CD4-positive, alpha-beta memory T cell (primary cell): ENCODE measurements at regions of chr12 and their contacts with region 1.

Region 1: DNA sequence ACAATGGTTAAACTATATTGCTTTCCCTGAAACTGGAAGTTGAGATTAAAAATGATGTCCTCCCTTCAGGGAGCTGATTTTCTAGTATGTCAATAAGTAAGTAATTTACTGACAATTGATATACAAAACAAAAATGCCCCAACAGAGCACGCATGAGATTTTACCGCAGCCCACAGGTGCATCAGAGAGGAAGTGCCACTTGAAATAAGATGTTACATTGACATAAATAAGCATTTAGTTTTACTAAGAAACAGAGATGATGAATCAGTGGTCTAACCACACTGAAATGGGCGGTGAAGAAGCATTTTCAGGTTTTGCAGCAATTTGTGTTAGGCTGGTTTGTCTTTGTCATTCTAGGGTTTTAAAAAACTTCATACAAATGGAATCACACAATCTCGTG is 8.8 kb upstream of the CLECL1 start:
- DNase-seq: peak; percentile 85 to 94 (median 91)
- H3K4me3 ChIP-seq: peak overlapping the region in 1 of 2 donors; percentile 38
- H3K4me3 Mint-ChIP-seq: peak overlapping the region; percentile 66 to 92 (median 84)
- H3K27ac ChIP-seq: peak overlapping the region; percentile 62
- H3K27ac Mint-ChIP-seq: peak overlapping the region; percentile 81 to 100 (median 99)
- H3K4me1 ChIP-seq: peaks cover 68% of the 10 kb centered on the region
- H3K4me1 Mint-ChIP-seq: peaks cover 50 to 69% (median 59%) of the 10 kb centered on the region in 4 donors
- H3K27me3 ChIP-seq: no peaks in the 10 kb centered on the region
- H3K27me3 Mint-ChIP-seq: no peaks in the 10 kb centered on the region

Region 2: DNA sequence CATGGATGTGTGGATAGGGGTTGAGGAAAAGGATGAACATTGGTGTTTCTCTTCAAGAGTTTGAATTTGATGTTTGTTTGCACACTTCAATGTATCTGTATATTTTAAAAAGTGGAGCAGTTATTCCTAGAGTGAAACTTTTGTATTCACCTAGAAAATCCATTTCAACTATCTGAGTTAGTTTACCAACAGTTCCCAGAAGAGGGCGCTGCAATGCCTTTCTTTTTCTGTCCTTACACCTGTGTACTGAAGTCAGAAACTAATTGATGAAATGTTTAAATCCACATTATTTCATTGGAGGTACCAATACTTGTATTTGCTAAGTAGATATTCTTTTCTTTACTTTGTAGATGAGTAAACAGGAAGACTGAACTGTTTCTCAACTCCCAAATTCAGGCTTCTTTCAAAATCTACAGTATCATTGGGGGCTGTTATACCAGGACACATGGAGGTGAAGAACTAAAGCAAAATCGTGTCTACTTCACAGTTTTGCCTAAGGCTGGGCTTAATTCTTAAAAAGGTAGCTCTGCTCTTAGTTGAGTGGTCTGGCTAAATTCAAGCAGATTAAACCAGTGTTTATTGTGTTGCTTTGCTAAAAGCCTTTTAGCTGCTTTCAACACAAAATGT is 107.4 kb before region 1 on chr12:
- CTCF ChIA-PET with region 1: interaction called, 53 read pairs
- POLR2A ChIA-PET with region 1: interaction called, 23 read pairs
- intact Hi-C with region 1: loop called (anchors 1 kb)
- DNase-seq: peak; percentile 76 to 77 (median 77)
- H3K4me3 ChIP-seq: no peak overlapping the region
- H3K4me3 Mint-ChIP-seq: peak overlapping the region in 6 of 8 donors; percentile 51 to 80 (median 61)
- H3K27ac ChIP-seq: no peak overlapping the region
- H3K27ac Mint-ChIP-seq: peak overlapping the region; percentile 22 to 97 (median 91)
- H3K4me1 ChIP-seq: peaks cover 70% of the 10 kb centered on the region
- H3K4me1 Mint-ChIP-seq: peaks cover 47 to 92% (median 73%) of the 10 kb centered on the region in 4 donors
- H3K27me3 ChIP-seq: no peaks in the 10 kb centered on the region
- H3K27me3 Mint-ChIP-seq: no peaks in the 10 kb centered on the region

Region 3: DNA sequence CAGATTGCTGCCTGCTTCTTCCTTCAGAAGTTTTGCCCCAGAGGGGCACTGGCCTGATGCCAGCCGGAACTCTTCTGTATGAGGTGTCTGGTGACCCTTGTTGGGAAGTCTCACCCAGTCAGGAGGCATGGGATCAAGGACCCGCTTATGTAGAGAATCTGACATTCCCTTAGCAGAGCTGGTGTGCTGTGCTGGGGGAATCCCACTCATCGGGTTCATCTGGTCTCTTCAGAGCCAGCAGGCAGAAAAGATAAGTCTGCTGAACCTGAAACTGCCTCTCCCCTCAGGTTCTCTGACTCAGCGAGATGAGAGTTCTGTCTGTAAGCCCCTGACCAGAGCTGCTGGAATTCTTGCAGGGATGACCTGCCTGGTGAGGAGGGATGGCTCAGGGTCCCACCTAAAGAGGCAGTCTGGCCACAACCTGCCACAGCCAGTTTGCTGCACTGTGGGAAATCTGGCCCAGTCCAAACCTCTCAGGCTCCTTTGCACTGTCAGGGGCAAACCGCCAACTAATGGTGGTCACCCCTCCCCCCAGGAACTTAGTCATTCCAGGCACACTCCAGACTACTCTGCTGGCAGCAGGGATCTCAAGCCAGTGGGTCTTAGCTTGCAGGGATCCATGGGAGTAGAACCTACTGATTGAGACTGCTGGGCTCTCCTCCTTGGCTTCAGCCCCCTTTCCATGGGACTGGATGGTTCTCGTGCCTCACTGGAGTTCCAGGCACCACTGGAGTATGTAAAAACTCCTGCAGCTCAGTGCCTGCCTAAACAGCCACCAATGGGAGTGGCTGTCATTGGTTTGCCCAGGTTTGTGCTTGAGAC is 68.1 kb before region 1 on chr12:
- CTCF ChIA-PET with region 1: interaction called, 13 read pairs
- POLR2A ChIA-PET with region 1: interaction called, 39 read pairs
- intact Hi-C with region 1: loop called (anchors 2 kb)
- DNase-seq: peak; percentile 46 to 81 (median 56)
- H3K4me3 ChIP-seq: peak overlapping the region; percentile 32 to 74
- H3K4me3 Mint-ChIP-seq: peak overlapping the region; percentile 87 to 95 (median 94)
- H3K27ac ChIP-seq: peak overlapping the region; percentile 79
- H3K27ac Mint-ChIP-seq: peak overlapping the region; percentile 79 to 98 (median 96)
- H3K4me1 ChIP-seq: peaks cover 72% of the 10 kb centered on the region
- H3K4me1 Mint-ChIP-seq: peaks cover 44 to 89% (median 61%) of the 10 kb centered on the region in 4 donors
- H3K27me3 ChIP-seq: no peaks in the 10 kb centered on the region
- H3K27me3 Mint-ChIP-seq: no peaks in the 10 kb centered on the region

Region 4: GRCh38 chr12:9721394-9722092 is 20.2 kb before region 1 on chr12:
- CTCF ChIA-PET with region 1: interaction called, 11 read pairs
- POLR2A ChIA-PET with region 1: interaction called, 4 read pairs
- intact Hi-C with region 1: no loop called
- DNase-seq: no peak
- H3K4me3 ChIP-seq: no peak overlapping the region
- H3K4me3 Mint-ChIP-seq: no peak overlapping the region
- H3K27ac ChIP-seq: no peak overlapping the region
- H3K27ac Mint-ChIP-seq: peak overlapping the region in 2 of 7 donors; percentile 29 to 40
- H3K4me1 ChIP-seq: no peaks in the 10 kb centered on the region
- H3K4me1 Mint-ChIP-seq: peaks cover 0 to 10% (median 2%) of the 10 kb centered on the region in 4 donors
- H3K27me3 ChIP-seq: no peaks in the 10 kb centered on the region
- H3K27me3 Mint-ChIP-seq: peaks cover 0 to 6% of the 10 kb centered on the region in 2 donors

Region 5: DNA sequence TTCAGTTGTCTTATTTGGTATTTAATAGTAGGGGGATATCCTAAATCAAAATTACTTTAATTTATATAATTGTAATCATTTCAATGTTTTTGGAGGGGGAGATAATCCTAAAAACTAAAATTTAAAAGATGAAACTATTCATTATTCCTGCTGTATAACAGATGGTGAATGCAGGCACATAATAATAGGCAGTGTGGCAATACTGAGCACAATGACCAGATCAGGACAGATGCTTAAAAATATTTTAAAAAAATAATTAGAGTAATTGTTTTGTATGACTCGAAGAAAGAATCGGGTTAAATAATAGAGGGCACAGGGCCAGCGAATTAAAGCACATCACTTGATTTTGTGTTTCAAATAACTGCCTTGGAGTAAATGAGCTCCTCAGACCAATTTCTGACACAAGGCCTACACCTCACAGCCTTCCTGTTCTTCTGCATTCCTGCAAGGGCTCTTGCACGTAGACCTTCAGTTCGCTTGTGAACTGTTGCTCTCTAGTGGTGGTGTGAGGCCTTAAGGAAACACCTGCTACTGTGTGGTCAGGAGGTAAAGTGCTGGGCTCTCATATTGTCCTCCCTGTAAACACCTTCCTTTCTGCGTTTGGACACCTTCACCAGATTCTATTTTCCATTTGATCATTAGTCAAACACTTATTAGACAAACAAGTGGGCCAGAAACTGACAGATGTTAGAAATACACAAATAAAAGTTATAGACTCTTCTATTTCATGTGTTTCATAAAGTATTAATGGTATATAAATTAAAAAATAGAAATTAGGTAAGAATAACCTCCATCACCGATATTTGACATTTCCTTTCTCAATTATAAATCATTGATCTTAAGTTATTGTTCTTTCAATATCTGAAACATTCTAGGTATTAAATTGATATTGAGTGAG is 56.2 kb after region 1 on chr12:
- CTCF ChIA-PET with region 1: interaction called, 889 read pairs
- POLR2A ChIA-PET with region 1: interaction called, 19 read pairs
- intact Hi-C with region 1: no loop called
- DNase-seq: peak; percentile 73 to 79 (median 75)
- H3K4me3 ChIP-seq: no peak overlapping the region
- H3K4me3 Mint-ChIP-seq: peak overlapping the region in 4 of 8 donors; percentile 4 to 70 (median 41)
- H3K27ac ChIP-seq: no peak overlapping the region
- H3K27ac Mint-ChIP-seq: peak overlapping the region in 6 of 7 donors; percentile 57 to 89 (median 81)
- H3K4me1 ChIP-seq: peaks cover 51% of the 10 kb centered on the region
- H3K4me1 Mint-ChIP-seq: peaks cover 35 to 48% (median 43%) of the 10 kb centered on the region in 4 donors
- H3K27me3 ChIP-seq: no peaks in the 10 kb centered on the region
- H3K27me3 Mint-ChIP-seq: peaks cover 0 to 2% of the 10 kb centered on the region in 2 donors

Region 6: DNA sequence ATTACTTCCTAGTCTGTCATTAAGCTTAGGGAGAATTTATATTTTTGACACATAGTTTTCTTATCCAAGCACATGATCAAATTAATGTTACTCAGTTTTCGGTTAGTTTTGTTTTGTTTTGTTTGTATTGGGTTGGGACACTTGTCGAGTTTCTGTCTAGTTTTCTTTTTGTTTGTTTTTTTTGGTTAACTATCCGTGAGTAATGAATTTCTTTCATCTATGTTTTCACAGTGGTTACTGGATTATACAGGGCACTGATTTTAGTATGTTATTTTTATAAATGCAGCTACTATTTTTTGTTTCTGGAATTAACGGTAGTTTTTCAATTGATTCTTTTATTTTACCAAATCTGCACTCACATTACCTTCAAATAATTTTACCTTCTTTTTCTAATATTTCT is 88.3 kb after region 1 on chr12:
- CTCF ChIA-PET with region 1: no interaction called
- POLR2A ChIA-PET with region 1: no interaction called
- intact Hi-C with region 1: no loop called
- DNase-seq: no peak
- H3K4me3 ChIP-seq: no peak overlapping the region
- H3K4me3 Mint-ChIP-seq: no peak overlapping the region
- H3K27ac ChIP-seq: no peak overlapping the region
- H3K27ac Mint-ChIP-seq: no peak overlapping the region
- H3K4me1 ChIP-seq: no peaks in the 10 kb centered on the region
- H3K4me1 Mint-ChIP-seq: peaks cover 0 to 1% (median 0%) of the 10 kb centered on the region in 4 donors
- H3K27me3 ChIP-seq: no peaks in the 10 kb centered on the region
- H3K27me3 Mint-ChIP-seq: peaks cover 0 to 3% of the 10 kb centered on the region in 2 donors

Region 7: GRCh38 chr12:10027721-10028120 is 286.0 kb after region 1 on chr12:
- CTCF ChIA-PET with region 1: no interaction called
- POLR2A ChIA-PET with region 1: no interaction called
- intact Hi-C with region 1: no loop called
- DNase-seq: no peak
- H3K4me3 ChIP-seq: no peak overlapping the region
- H3K4me3 Mint-ChIP-seq: no peak overlapping the region
- H3K27ac ChIP-seq: no peak overlapping the region
- H3K27ac Mint-ChIP-seq: no peak overlapping the region
- H3K4me1 ChIP-seq: no peaks in the 10 kb centered on the region
- H3K4me1 Mint-ChIP-seq: no peaks in the 10 kb centered on the region
- H3K27me3 ChIP-seq: no peaks in the 10 kb centered on the region
- H3K27me3 Mint-ChIP-seq: peaks cover 4 to 10% of the 10 kb centered on the region in 2 donors